B cell (primary cell): ENCODE measurements at regions of chr6 and their contacts with region 1.

Region 1: GRCh38 chr6:31493875-31494694 is 3.9 kb upstream of the MICB start:
- DNase-seq: peak; percentile 89
- ATAC-seq: peak; percentile 47
- H3K4me3 ChIP-seq: peak overlapping the region; percentile 76 to 91 (median 85)
- H3K4me3 Mint-ChIP-seq: peak overlapping the region; percentile 83
- H3K27ac ChIP-seq: peak overlapping the region; percentile 74 to 80
- H3K27ac Mint-ChIP-seq: peak overlapping the region; percentile 89
- H3K4me1 ChIP-seq: peaks cover 42 to 54% of the 10 kb centered on the region in 2 donors
- H3K4me1 Mint-ChIP-seq: peaks cover 46% of the 10 kb centered on the region
- H3K27me3 ChIP-seq: no peaks in the 10 kb centered on the region
- H3K27me3 Mint-ChIP-seq: no peaks in the 10 kb centered on the region
- CTCF ChIP-seq: peak; percentile 88

Region 2: GRCh38 chr6:30453508-30454116 is 1040.5 kb before region 1 on chr6:
- CTCF ChIA-PET with region 1: no interaction called
- POLR2A ChIA-PET with region 1: no interaction called
- intact Hi-C with region 1: no loop called
- DNase-seq: peak; percentile 88
- ATAC-seq: peak; percentile 90
- H3K4me3 ChIP-seq: no peak overlapping the region
- H3K4me3 Mint-ChIP-seq: peak overlapping the region; percentile 69
- H3K27ac ChIP-seq: no peak overlapping the region
- H3K27ac Mint-ChIP-seq: peak overlapping the region; percentile 63
- H3K4me1 ChIP-seq: peaks cover 41 to 43% of the 10 kb centered on the region in 2 donors
- H3K4me1 Mint-ChIP-seq: peaks cover 32% of the 10 kb centered on the region
- H3K27me3 ChIP-seq: peaks cover 0 to 87% (median 62%) of the 10 kb centered on the region in 4 experiments
- H3K27me3 Mint-ChIP-seq: peaks cover 75% of the 10 kb centered on the region
- CTCF ChIP-seq: peak; percentile 83

Region 3: DNA sequence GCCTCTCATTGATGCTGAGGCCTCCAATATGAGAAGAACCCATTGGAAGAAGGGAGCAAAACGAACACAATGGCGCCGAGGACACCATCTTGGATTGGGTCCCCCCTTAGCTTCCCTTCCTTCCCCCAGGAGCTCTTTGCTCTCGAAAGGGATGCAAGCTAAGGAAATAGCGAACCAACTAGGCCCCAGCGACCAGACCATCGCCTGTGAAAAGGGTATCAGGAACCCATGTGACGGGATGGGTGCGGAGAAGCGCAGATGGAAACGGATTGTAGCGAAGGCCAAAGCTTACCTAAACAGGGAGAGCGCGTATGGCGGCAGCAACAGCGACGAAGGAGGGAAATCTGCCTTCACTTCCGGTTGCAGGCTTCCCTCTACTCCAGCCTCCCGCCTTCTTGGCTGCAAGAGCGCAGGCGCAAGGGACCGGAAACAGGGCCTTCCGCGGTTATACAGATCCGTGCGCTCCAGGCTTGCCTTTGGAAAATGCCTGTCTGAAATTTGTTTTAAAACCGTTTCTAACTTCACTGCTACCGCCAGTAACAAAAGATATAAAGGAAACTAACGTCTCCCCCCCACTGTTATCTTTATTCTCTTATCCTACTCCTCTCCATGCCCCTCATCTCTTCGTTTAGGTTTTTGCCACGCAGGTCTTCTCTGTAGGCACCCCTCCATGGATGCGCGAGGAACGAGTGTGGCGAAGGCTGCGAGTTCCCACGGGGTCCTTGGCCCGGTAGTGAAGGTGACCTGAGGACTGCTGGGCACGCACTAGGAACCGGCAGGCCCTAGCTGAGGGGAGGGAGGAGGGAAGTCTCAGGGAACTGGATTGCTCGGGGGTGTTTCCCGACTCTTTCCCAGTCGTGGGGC is 47.8 kb after region 1 on chr6 and contains the start of gene DDX39B:
- CTCF ChIA-PET with region 1: interaction called, 33 read pairs
- POLR2A ChIA-PET with region 1: interaction called, 10 read pairs
- intact Hi-C with region 1: loop called (anchors 1 kb)
- DNase-seq: peak; percentile 97
- ATAC-seq: peak; percentile 72
- H3K4me3 ChIP-seq: peak within 1 kb of the TSS; percentile 79 to 100 (median 97)
- H3K4me3 Mint-ChIP-seq: peak within 1 kb of the TSS; percentile 99
- H3K27ac ChIP-seq: peak within 1 kb of the TSS; percentile 97 to 99
- H3K27ac Mint-ChIP-seq: peak within 1 kb of the TSS; percentile 93
- H3K4me1 ChIP-seq: peaks cover 37 to 43% of the 10 kb centered on the region in 2 donors
- H3K4me1 Mint-ChIP-seq: peaks cover 50% of the 10 kb centered on the region
- H3K27me3 ChIP-seq: no peaks in the 10 kb centered on the region
- H3K27me3 Mint-ChIP-seq: no peaks in the 10 kb centered on the region
- CTCF ChIP-seq: no peak
- total RNA-seq, gene DDX39B: 576 and 577 TPM in 2 replicates